Endothelial cell of umbilical vein (primary cell): ENCODE measurements at regions of chr3 and their contacts with region 1.

Region 1: DNA sequence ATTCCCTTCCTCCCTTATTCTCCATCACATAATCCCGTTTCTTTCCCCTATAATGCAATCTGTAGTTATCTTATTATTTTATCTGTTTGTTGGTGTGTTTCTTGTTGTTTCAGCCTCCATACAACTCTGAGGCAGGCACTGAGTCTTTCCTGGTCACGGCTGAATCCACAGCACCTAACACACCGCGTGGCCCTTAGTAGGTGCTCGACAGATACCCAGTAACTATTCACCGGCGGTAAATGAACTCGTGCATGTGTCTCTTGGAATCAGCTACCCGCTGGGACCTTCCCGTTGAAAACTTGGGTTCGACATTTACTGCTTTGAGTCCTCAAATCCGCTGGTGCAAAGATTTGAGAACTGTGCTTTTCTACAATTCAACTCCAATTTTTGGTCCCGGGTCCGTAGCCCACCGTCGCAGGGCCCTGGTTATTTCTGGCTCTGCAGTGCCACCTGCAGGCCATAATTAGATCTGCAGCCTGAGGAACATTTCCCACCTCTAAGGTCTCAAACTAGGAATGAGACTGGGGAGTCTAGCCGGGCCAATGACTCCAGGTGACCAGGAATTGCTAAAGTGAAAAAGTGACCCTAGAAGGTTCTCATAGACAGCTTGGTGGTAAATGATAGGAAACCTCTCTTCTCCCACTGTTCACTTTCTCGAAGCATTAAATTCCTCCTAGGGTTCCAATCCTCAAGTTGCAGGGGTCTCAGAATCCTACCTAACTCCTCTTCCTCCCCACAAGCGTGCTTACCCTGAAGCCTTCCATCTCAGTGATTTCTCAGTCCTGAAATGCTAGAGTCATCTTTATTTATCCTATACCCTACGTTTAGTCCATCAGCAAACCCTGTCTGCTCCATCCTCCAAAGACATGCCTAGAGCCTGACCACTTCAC is 40.0 kb upstream of the TRH start:
- DNase-seq: peak; percentile 47
- H3K4me3 ChIP-seq: no peak overlapping the region
- H3K27ac ChIP-seq: no peak overlapping the region
- H3K4me1 ChIP-seq: peaks cover 3% of the 10 kb centered on the region
- H3K27me3 ChIP-seq: peaks cover 0 to 8% of the 10 kb centered on the region in 2 experiments
- CTCF ChIP-seq: peak; percentile 73 to 88
- POLR2A ChIP-seq: no peak

Region 2: DNA sequence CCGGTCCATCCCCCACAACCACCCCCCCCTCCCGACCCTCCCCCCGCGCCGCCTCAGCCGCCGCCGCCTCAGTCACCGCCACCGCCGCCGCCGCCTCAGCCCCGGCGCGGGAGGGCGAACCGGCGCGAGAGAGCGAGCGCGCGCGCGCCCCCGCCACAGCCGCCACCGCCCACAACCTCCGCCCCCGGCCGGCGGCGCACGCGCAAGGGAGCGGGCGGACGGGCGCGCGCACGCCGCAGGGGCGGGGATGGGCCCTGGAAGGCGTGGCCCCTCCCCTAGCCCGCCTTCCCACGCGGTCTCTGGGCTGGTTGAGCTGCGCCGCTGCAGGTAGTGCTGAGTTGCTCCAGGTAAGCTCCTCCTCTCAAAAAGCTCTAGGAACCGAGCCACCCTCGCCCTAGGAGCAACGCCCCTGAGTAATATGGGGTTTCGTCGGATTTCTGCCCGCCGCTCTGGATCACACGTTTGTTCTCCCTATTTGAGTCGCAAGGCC is 40.9 kb before region 1 on chr3 and contains the start of gene TMCC1:
- CTCF ChIA-PET with region 1: interaction called, 3 read pairs
- POLR2A ChIA-PET with region 1: no interaction called
- dilution Hi-C with region 1: no loop called
- intact Hi-C with region 1: loop called (anchors 2 kb)
- DNase-seq: peak; percentile 78
- H3K4me3 ChIP-seq: peak within 1 kb of the TSS; percentile 54 to 91 (median 89)
- H3K27ac ChIP-seq: peak within 1 kb of the TSS; percentile 89
- H3K4me1 ChIP-seq: peaks cover 47% of the 10 kb centered on the region
- H3K27me3 ChIP-seq: no peaks in the 10 kb centered on the region
- CTCF ChIP-seq: no peak
- POLR2A ChIP-seq: peak; percentile 54
- total RNA-seq, gene TMCC1: 36.6 and 38.4 TPM in 2 replicates

Region 3: DNA sequence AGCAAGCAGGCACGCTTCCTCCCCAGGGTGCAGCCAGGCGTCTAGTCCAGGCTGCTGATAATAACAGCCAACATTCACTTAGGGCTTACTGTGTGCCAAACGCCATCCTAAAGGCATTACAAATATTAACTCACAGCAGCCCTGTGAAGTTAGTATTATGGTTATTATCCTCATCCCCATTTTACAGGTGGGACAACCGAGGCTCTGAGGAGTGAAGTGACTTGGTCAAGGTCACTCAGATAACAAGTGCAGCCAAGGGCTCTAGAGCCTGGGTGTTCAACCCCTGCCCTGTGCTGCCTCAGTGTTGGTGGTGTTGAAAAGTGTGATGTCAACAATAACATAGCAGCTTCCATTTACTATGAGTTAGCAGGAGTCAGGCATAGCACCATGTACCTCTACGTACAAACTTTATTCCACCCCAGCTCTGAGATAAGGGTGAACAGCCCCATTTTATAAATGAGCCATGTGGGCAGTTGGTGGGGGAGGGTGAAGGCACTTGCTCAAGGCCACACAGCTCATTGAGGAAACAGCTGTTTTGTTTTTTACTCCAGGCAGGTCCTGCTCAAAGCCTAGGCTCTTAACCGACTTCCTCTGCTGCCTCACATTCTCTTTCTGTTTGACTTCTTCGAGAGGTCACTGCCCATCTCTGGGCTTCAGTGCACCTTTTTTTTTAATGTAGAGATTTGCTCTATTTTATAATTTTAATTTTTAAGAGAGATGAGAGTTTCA is 16.0 kb after region 1 on chr3:
- CTCF ChIA-PET with region 1: no interaction called
- POLR2A ChIA-PET with region 1: no interaction called
- dilution Hi-C with region 1: no loop called
- intact Hi-C with region 1: no loop called
- DNase-seq: no peak
- H3K4me3 ChIP-seq: no peak overlapping the region
- H3K27ac ChIP-seq: no peak overlapping the region
- H3K4me1 ChIP-seq: no peaks in the 10 kb centered on the region
- H3K27me3 ChIP-seq: peaks cover 9 to 13% of the 10 kb centered on the region in 2 experiments
- CTCF ChIP-seq: no peak
- POLR2A ChIP-seq: no peak